ENCODE measurements at regions of chr16 and their contacts with region 1.

Region 1: DNA sequence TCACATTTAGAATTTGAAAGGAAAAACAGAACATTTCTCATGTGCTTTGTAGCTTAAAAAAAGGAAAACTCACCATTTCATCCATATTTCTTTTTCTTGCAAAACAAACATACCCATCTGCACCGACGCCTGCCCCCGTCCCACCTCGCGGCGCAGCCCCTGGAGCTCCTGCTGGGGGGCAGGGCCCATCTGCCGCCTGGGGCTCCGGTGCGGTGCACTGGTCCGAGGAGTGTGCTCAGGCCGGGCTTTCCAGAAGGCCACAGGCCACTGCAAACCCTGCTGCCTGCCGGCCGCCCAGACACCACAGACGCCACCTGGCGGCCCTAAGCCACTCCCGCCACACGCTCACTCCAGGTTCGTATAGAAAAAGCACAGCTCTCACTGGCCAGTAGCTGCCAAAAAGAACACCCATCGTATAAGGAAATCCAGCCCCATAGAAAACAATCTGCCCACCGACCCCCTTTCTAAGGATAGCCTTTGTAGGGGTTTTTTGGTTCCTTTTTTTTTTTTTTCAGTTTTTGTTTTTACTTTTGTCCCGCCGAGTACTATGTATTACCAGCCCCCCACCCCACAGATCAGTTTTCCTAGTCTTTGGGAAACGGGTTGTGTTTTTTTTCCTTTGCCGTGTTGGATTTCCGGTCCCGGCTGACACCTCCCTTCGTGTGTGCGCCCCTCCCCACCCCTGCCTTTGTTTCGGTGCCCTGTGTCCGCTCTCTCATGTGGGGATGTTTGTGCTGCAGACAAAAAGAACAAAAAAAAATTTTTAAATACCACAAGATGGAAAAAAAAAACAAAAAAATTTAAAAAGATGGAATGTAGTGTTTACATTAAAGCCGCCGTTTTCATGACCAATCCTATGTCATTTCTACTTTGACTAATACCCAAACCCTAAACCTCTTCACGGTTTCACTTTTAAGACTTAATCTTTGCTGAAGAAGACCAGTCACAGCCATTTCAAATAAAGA is 68.8 kb downstream of the AMFR start:
- DNase-seq: peak; percentile 84
- ATAC-seq: peak; percentile 92
- H3K4me3 ChIP-seq: peak overlapping the region; percentile 55 to 77 (median 66)
- H3K27ac ChIP-seq: no peak overlapping the region
- H3K4me1 ChIP-seq: peaks cover 21% of the 10 kb centered on the region
- H3K27me3 ChIP-seq: peaks cover 2 to 4% of the 10 kb centered on the region in 2 experiments; a peak in 4 of 5 replicates
- CTCF ChIP-seq: peak; percentile 97
- EP300 ChIP-seq: no peak
- POLR2A ChIP-seq: no peak; a peak in 1 of 4 replicates
- RAD21 ChIP-seq: peak; percentile 94

Region 2: DNA sequence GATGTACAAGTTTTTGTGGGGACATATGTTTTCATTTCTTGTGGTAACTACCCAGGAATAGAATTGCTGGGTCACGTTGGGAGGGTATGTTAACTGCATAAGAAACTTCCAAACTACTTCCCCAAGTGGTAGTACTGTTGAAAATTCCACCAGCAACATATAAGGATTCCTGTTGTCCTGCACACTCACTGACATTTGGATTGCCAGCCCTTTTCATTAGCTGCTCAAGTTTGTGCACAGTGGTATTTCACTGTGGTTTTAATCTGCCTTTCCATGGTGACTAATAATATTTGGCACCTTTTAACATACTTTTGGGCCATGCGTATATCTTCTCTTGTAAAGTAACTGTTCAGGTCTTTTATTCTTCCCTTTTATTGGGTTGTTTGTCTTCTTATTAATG is 62.0 kb before region 1 on chr16:
- CTCF ChIA-PET with region 1: no interaction called
- POLR2A ChIA-PET with region 1: no interaction called
- in situ Hi-C with region 1: loop called (anchors 10 kb)
- intact Hi-C with region 1: no loop called
- DNase-seq: no peak
- ATAC-seq: no peak
- H3K4me3 ChIP-seq: no peak overlapping the region
- H3K27ac ChIP-seq: no peak overlapping the region
- H3K4me1 ChIP-seq: no peaks in the 10 kb centered on the region
- H3K27me3 ChIP-seq: peaks cover 1 to 12% of the 10 kb centered on the region in 2 experiments; a peak in 3 of 5 replicates
- CTCF ChIP-seq: no peak
- EP300 ChIP-seq: no peak
- POLR2A ChIP-seq: no peak
- RAD21 ChIP-seq: no peak

Region 3: GRCh38 chr16:56332464-56333079 is 24.0 kb before region 1 on chr16:
- CTCF ChIA-PET with region 1: interaction called, 58 read pairs
- POLR2A ChIA-PET with region 1: interaction called, 4 read pairs
- in situ Hi-C with region 1: no loop called
- intact Hi-C with region 1: loop called (anchors 1 kb)
- DNase-seq: peak; percentile 78
- ATAC-seq: peak; percentile 93
- H3K4me3 ChIP-seq: no peak overlapping the region
- H3K27ac ChIP-seq: no peak overlapping the region
- H3K4me1 ChIP-seq: no peaks in the 10 kb centered on the region
- H3K27me3 ChIP-seq: peaks cover 5 to 69% of the 10 kb centered on the region in 2 experiments; a peak in 4 of 5 replicates
- CTCF ChIP-seq: peak; percentile 99
- EP300 ChIP-seq: no peak
- POLR2A ChIP-seq: no peak
- RAD21 ChIP-seq: peak; percentile 95

Region 4: DNA sequence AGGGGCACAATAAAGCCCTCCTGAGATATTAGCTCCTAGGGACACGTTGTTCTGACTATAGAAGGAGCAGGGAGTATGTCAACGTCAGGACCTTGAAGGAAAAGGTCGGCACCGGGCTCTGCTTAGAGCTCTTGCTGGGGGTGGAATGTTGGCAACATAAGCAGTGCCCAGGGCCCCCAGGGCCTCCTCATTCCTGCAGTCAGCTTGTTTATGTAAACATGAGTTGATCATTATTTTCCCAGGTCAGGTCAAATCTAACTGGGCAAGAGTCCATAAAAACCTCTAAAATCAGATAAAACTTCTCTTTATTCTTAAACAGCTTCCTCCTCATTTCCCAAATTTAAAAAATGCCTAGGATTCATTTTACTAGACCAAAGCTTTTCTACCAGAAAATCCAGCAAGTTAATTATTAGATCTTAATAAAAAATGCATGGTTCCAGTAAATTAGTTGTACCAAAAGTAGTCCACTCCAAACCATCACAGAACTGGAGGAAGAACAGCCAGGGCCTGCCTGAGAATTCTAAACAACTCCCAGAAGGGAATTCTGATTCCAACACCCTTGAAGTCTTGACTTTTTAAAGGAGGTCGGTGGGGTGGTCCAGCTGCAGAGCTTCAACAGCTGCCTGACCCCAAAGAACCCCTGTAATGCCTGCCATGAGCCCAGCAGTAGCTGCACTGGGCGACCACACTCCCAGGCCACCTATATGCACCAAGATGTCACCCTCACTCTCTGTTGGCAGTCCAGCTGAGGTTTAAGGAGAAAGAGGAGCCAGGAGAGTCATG is 14.5 kb after region 1 on chr16:
- CTCF ChIA-PET with region 1: no interaction called
- POLR2A ChIA-PET with region 1: interaction called, 4 read pairs
- in situ Hi-C with region 1: no loop called
- intact Hi-C with region 1: loop called (anchors 2 kb)
- DNase-seq: no peak
- ATAC-seq: peak; percentile 49; the same call in 2 of the 3 replicates
- H3K4me3 ChIP-seq: no peak overlapping the region
- H3K27ac ChIP-seq: no peak overlapping the region
- H3K4me1 ChIP-seq: peaks cover 11% of the 10 kb centered on the region
- H3K27me3 ChIP-seq: no peaks in the 10 kb centered on the region
- CTCF ChIP-seq: no peak
- EP300 ChIP-seq: no peak
- POLR2A ChIP-seq: no peak
- RAD21 ChIP-seq: no peak

Region 5: GRCh38 chr16:56401482-56401881 is 44.9 kb after region 1 on chr16:
- CTCF ChIA-PET with region 1: no interaction called
- POLR2A ChIA-PET with region 1: no interaction called
- in situ Hi-C with region 1: no loop called
- intact Hi-C with region 1: no loop called
- DNase-seq: peak; percentile 42
- ATAC-seq: peak; percentile 99
- H3K4me3 ChIP-seq: no peak overlapping the region
- H3K27ac ChIP-seq: no peak overlapping the region
- H3K4me1 ChIP-seq: no peaks in the 10 kb centered on the region
- H3K27me3 ChIP-seq: no peaks in the 10 kb centered on the region
- CTCF ChIP-seq: peak; percentile 48
- EP300 ChIP-seq: no peak
- POLR2A ChIP-seq: no peak
- RAD21 ChIP-seq: peak; percentile 25; the same call in 1 of the 2 replicates

Region 6: DNA sequence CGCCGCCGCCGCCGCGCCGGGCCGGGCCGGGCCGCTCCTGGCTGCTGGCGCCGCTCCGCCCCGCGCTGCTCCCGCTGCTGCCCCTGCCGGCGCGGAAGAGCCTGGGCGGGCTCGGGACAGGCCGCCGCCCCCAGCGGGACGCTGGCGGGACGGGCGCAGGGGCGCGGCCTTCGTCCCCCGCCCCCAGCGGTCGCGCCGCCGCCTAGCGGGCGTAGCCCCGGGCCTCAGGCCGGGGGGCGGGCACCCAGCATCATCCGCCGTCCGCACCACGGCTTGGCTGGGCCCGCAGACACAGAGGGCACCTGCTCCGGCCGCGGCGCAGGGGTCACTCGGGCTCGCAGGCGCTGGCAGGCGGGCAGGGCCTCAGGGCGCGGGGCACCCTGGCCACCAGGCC is 68.9 kb after region 1 on chr16 and contains the start of gene AMFR:
- CTCF ChIA-PET with region 1: no interaction called
- POLR2A ChIA-PET with region 1: no interaction called
- in situ Hi-C with region 1: no loop called
- intact Hi-C with region 1: loop called (anchors 5 kb)
- DNase-seq: peak; percentile 74
- ATAC-seq: peak; percentile 94
- H3K4me3 ChIP-seq: peak within 1 kb of the TSS; percentile 78 to 90 (median 89)
- H3K27ac ChIP-seq: peak within 1 kb of the TSS; percentile 68
- H3K4me1 ChIP-seq: peaks cover 50% of the 10 kb centered on the region
- H3K27me3 ChIP-seq: no peaks in the 10 kb centered on the region; a peak in 2 of 5 replicates
- CTCF ChIP-seq: peak; percentile 62
- EP300 ChIP-seq: no peak
- POLR2A ChIP-seq: no peak; a peak in 1 of 4 replicates
- RAD21 ChIP-seq: peak; percentile 82
- total RNA-seq, gene AMFR: 80.0 and 108 TPM in 2 replicates

Measured in HepG2 (cell line).